Colonic mucosa (tissue), 4 donors: ENCODE measurements at regions of chr1 and their contacts with region 1.

Region 1: DNA sequence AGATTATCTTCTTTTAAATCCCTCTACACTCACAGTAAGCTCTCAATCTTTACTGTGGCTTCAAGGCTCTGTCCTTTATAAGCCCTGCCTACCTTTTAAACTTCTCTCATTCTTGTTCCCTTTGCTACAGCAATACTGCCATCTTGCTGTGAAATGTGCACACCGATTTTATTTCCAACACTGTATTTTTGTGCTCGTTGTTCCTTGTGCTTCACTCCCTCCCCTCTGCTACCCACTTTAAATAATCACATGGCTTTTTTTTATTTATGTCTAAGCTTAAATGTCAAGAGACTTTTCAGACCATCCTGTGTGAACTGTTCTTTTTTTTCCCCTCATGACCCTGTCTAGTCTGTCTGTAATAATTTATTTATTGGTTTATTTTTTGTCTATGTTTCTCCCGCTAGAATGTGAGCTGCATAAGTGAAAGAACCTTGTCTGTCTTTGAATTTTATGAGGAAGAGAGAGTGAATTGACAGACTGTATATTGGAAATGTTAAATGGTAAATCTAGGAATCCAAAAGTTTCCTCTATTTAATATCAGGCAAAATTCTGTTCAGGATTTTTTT is 45.7 kb downstream of the ABCD3 start:
- DNase-seq: peak; percentile 36
- H3K4me3 ChIP-seq: no peak overlapping the region
- H3K27ac ChIP-seq: peak overlapping the region; percentile 7
- H3K4me1 ChIP-seq: no peaks in the 10 kb centered on the region
- H3K27me3 ChIP-seq: no peaks in the 10 kb centered on the region
- CTCF ChIP-seq: peak; percentile 47

Region 2: GRCh38 chr1:94061513-94062443 is 402.1 kb before region 1 on chr1:
- intact Hi-C with region 1: loop called (anchors 5 kb)
- DNase-seq: peak; percentile 75
- H3K4me3 ChIP-seq: no peak overlapping the region
- H3K27ac ChIP-seq: no peak overlapping the region
- H3K4me1 ChIP-seq: no peaks in the 10 kb centered on the region
- H3K27me3 ChIP-seq: no peaks in the 10 kb centered on the region
- CTCF ChIP-seq: peak; percentile 73

Region 3: GRCh38 chr1:94422115-94422820 is 41.6 kb before region 1 on chr1:
- intact Hi-C with region 1: loop called (anchors 5 kb)
- DNase-seq: no peak
- H3K4me3 ChIP-seq: no peak overlapping the region
- H3K27ac ChIP-seq: no peak overlapping the region
- H3K4me1 ChIP-seq: peaks cover 8% of the 10 kb centered on the region
- H3K27me3 ChIP-seq: no peaks in the 10 kb centered on the region
- CTCF ChIP-seq: no peak

Region 4: DNA sequence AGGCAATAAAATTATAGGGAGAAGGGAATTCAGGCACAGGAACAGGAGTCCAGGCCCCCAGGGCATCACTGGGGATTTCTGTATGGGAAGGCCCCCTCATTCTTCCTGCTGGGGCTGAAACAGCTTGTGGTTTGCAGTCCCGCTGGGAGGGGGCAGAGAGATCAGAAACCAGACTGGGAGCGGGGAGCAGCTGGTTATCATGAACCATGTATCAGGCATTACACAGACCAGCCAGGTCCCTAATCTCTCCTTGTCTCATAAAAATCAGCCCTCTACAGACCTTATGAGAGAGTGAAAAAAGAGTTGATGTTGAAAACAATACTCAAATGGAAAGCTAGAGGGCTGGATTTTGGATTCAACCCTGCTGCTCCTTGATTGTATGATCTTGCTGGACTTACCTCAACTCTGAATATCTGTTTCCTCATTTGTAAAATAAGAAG is 171.1 kb after region 1 on chr1:
- intact Hi-C with region 1: no loop called
- DNase-seq: no peak
- H3K4me3 ChIP-seq: no peak overlapping the region
- H3K27ac ChIP-seq: no peak overlapping the region
- H3K4me1 ChIP-seq: no peaks in the 10 kb centered on the region
- H3K27me3 ChIP-seq: no peaks in the 10 kb centered on the region
- CTCF ChIP-seq: no peak